B cell (primary cell): ENCODE measurements at regions of chr19 and their contacts with region 1.

Region 1: DNA sequence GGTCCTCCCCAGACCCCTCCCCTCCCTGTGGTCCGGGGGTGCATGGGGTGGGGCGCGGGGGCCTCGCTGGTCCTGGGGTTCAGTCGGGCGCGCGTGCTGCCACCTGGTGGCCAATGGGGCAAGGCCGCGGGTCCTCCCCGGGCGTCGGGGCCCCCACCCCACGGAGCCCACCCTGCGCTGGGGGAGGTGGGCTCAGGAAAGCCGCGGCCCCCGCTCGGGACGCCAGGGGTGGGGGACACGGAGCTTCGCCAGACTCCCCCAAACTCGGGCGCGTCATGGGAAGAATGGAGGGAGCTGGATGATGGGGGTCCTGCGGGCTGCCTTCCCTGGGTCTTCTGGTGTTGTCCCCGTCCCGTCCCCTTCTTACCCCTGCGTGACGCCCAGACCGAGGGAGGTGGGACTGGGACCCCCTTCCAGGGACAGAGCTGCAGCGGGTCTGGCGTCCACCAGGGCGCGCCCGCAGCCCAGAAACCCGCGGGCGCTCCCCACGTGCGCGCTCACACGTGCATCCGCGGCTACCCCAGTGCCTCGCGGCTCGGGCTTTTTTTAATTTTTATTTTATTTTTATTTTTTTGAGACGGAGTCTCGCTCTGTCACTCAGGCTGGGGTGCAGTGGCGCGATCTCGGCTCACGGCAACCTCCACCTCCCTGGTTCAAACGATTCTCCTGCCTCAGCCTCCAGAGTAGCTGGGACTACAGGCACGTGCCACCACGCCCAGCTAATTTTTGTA is 19.8 kb upstream of the TCF3 start:
- DNase-seq: peak; percentile 75
- ATAC-seq: peak; percentile 20
- H3K4me3 ChIP-seq: peak overlapping the region in 4 of 5 experiments; percentile 43 to 64 (median 54)
- H3K4me3 Mint-ChIP-seq: peak overlapping the region; percentile 81
- H3K27ac ChIP-seq: no peak overlapping the region
- H3K27ac Mint-ChIP-seq: peak overlapping the region; percentile 59
- H3K4me1 ChIP-seq: peaks cover 28 to 54% of the 10 kb centered on the region in 2 donors
- H3K4me1 Mint-ChIP-seq: peaks cover 37% of the 10 kb centered on the region
- H3K27me3 ChIP-seq: peaks cover 0 to 41% (median 27%) of the 10 kb centered on the region in 4 experiments
- H3K27me3 Mint-ChIP-seq: peaks cover 24% of the 10 kb centered on the region
- CTCF ChIP-seq: peak; percentile 93

Region 2: GRCh38 chr19:1551068-1552040 is 120.8 kb before region 1 on chr19:
- CTCF ChIA-PET with region 1: interaction called, 43 read pairs
- POLR2A ChIA-PET with region 1: no interaction called
- intact Hi-C with region 1: no loop called
- DNase-seq: no peak
- ATAC-seq: no peak
- H3K4me3 ChIP-seq: no peak overlapping the region
- H3K4me3 Mint-ChIP-seq: no peak overlapping the region
- H3K27ac ChIP-seq: no peak overlapping the region
- H3K27ac Mint-ChIP-seq: no peak overlapping the region
- H3K4me1 ChIP-seq: peaks cover 0 to 2% of the 10 kb centered on the region in 2 donors
- H3K4me1 Mint-ChIP-seq: no peaks in the 10 kb centered on the region
- H3K27me3 ChIP-seq: peaks cover 0 to 21% (median 0%) of the 10 kb centered on the region in 4 experiments
- H3K27me3 Mint-ChIP-seq: peaks cover 16% of the 10 kb centered on the region
- CTCF ChIP-seq: no peak

Region 3: DNA sequence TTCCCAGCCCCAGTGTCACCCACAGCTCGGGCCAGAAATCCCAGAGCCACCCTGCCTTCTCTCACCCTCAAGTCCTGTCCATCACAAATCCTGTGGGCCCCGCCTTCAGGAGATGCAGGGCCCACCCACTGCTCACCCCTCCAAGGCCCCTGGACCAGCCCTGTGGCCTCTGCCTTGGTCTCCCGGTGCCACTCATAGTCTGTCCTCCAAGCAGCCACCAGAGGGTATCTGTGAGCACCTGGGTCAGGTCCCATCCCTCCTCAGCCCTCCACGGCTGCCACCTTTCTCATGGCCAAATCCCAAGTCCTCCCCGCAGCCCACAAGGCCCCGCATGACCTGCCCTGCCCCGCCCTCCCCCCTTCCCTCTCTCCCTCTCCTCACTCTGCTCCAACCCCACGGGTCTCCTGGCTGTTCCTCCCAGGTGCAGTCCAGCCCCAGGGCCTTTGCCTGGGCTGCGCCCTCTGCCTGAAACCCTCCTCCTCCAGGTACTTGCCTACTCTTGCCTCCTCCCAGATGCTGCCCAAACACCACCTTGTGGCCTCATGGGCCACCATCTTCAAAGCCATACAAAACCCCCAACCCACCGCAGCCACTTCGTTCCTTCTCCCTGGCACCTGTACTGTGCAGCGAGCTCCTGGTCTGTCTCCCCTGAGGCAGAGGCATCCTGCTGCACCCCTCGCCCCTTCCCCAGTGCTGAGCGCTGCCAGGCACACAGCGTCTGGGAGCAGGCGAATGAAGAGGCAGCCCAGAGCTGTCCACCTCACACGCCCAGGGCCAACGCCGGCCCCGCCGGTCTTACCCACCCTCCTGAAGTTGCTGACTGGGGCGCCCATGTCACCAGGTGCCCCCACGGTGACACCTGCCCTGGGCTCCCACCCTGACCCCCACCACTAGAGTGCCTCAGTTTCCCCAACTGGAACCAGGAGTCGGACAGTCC is 53.8 kb before region 1 on chr19:
- CTCF ChIA-PET with region 1: interaction called, 40 read pairs
- POLR2A ChIA-PET with region 1: no interaction called
- intact Hi-C with region 1: no loop called
- DNase-seq: peak; percentile 49
- ATAC-seq: peak; percentile 65
- H3K4me3 ChIP-seq: no peak overlapping the region
- H3K4me3 Mint-ChIP-seq: peak overlapping the region; percentile 7
- H3K27ac ChIP-seq: peak overlapping the region in 1 of 2 donors; percentile 28
- H3K27ac Mint-ChIP-seq: peak overlapping the region; percentile 62
- H3K4me1 ChIP-seq: peaks cover 19 to 42% of the 10 kb centered on the region in 2 donors
- H3K4me1 Mint-ChIP-seq: peaks cover 33% of the 10 kb centered on the region
- H3K27me3 ChIP-seq: no peaks in the 10 kb centered on the region
- H3K27me3 Mint-ChIP-seq: no peaks in the 10 kb centered on the region
- CTCF ChIP-seq: peak; percentile 37

Region 4: DNA sequence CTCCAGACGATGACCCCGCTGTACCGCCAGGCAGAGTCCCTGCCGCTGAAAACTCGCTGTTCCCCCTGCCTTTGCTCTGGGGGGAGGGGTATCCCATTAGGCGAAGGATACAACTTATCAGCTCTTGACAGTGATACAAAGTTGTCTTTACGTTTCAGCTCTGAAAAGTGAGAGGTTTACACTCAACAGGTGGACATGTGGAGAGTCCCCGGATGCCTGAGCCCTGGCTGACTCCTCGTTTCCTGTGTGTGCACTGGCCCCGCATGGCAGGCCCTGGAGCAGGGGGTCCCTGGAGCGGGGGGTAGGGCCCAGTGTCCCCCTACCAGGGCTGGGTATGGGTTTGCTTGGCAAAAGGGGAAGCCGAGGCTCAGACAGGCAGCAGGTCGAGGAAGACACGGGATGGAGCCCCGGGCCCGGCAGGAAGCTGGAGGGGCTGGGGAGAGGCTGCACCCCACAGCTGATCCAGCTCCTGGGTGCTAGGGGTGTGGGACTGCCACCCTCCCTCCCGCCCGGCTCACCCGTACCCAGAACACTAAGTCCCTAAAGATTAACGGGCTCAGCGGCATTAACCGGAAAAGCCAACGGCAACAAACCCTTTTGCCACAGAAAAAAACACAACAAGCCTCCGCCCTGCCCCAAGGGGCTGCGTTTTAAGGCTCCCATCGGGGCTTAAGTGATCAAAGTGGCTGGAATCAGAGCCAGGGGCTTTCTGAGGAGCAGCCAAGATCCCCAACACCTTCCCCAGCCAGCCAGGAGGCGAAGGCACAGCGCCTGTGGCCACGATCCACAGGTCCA is 25.3 kb before region 1 on chr19:
- CTCF ChIA-PET with region 1: interaction called, 114 read pairs
- POLR2A ChIA-PET with region 1: interaction called, 43 read pairs
- intact Hi-C with region 1: no loop called
- DNase-seq: peak; percentile 61
- ATAC-seq: no peak
- H3K4me3 ChIP-seq: peak overlapping the region in 1 of 5 experiments; percentile 74
- H3K4me3 Mint-ChIP-seq: peak overlapping the region; percentile 96
- H3K27ac ChIP-seq: peak overlapping the region; percentile 67 to 70
- H3K27ac Mint-ChIP-seq: peak overlapping the region; percentile 96
- H3K4me1 ChIP-seq: peaks cover 39 to 48% of the 10 kb centered on the region in 2 donors
- H3K4me1 Mint-ChIP-seq: peaks cover 44% of the 10 kb centered on the region
- H3K27me3 ChIP-seq: no peaks in the 10 kb centered on the region
- H3K27me3 Mint-ChIP-seq: no peaks in the 10 kb centered on the region
- CTCF ChIP-seq: no peak

Region 5: GRCh38 chr19:1707240-1707639 is 35.0 kb after region 1 on chr19:
- CTCF ChIA-PET with region 1: no interaction called
- POLR2A ChIA-PET with region 1: no interaction called
- intact Hi-C with region 1: no loop called
- DNase-seq: no peak
- ATAC-seq: no peak
- H3K4me3 ChIP-seq: no peak overlapping the region
- H3K4me3 Mint-ChIP-seq: no peak overlapping the region
- H3K27ac ChIP-seq: no peak overlapping the region
- H3K27ac Mint-ChIP-seq: no peak overlapping the region
- H3K4me1 ChIP-seq: no peaks in the 10 kb centered on the region
- H3K4me1 Mint-ChIP-seq: no peaks in the 10 kb centered on the region
- H3K27me3 ChIP-seq: peaks cover 0 to 18% (median 0%) of the 10 kb centered on the region in 4 experiments
- H3K27me3 Mint-ChIP-seq: peaks cover 27% of the 10 kb centered on the region
- CTCF ChIP-seq: no peak

Region 6: GRCh38 chr19:1718420-1719291 is 46.5 kb after region 1 on chr19:
- CTCF ChIA-PET with region 1: no interaction called
- POLR2A ChIA-PET with region 1: no interaction called
- intact Hi-C with region 1: no loop called
- DNase-seq: no peak
- ATAC-seq: no peak
- H3K4me3 ChIP-seq: no peak overlapping the region
- H3K4me3 Mint-ChIP-seq: no peak overlapping the region
- H3K27ac ChIP-seq: no peak overlapping the region
- H3K27ac Mint-ChIP-seq: no peak overlapping the region
- H3K4me1 ChIP-seq: peaks cover 0 to 3% of the 10 kb centered on the region in 2 donors
- H3K4me1 Mint-ChIP-seq: no peaks in the 10 kb centered on the region
- H3K27me3 ChIP-seq: peaks cover 0 to 54% (median 16%) of the 10 kb centered on the region in 4 experiments
- H3K27me3 Mint-ChIP-seq: peaks cover 58% of the 10 kb centered on the region
- CTCF ChIP-seq: no peak

Region 7: DNA sequence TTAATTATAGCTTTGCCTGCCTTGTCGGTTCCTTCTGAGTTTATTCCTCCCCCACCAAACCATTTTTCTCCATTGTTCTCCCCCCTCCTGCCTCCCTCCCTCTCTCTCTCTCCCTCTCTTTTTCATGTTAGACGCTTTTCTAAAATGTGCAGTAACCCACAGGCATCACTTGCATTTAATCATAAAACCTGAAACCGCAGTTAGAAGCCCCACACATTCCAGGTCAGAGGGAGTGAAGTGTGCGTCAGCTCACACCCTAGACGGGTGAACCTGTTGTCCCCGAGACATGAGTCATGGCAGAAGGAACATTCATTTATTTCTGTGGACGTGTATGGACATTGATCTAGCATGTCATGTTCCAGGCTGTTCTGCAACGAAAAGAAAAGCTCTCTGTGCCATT is 101.0 kb after region 1 on chr19:
- CTCF ChIA-PET with region 1: interaction called, 15 read pairs
- POLR2A ChIA-PET with region 1: no interaction called
- intact Hi-C with region 1: no loop called
- DNase-seq: no peak
- ATAC-seq: no peak
- H3K4me3 ChIP-seq: no peak overlapping the region
- H3K4me3 Mint-ChIP-seq: no peak overlapping the region
- H3K27ac ChIP-seq: no peak overlapping the region
- H3K27ac Mint-ChIP-seq: no peak overlapping the region
- H3K4me1 ChIP-seq: peaks cover 7 to 28% of the 10 kb centered on the region in 2 donors
- H3K4me1 Mint-ChIP-seq: peaks cover 5% of the 10 kb centered on the region
- H3K27me3 ChIP-seq: peaks cover 0 to 81% (median 58%) of the 10 kb centered on the region in 4 experiments
- H3K27me3 Mint-ChIP-seq: peaks cover 66% of the 10 kb centered on the region
- CTCF ChIP-seq: no peak